ENCODE measurements at regions of chr11 and their contacts with region 1.

Region 1: GRCh38 chr11:2885676-2886081 is at the start of gene CDKN1C:
- DNase-seq: peak; percentile 86
- ATAC-seq: peak; percentile 89
- H3K4me3 Mint-ChIP-seq: peak within 1 kb of the TSS; percentile 74
- H3K27ac Mint-ChIP-seq: no peak within 1 kb of the TSS
- H3K4me1 Mint-ChIP-seq: peaks cover 19% of the 10 kb centered on the region
- H3K27me3 Mint-ChIP-seq: peaks cover 22% of the 10 kb centered on the region
- total RNA-seq, gene CDKN1C: 0.21 to 0.32 TPM

Region 2: GRCh38 chr11:2428322-2428795 is 457.3 kb before region 1 on chr11:
- CTCF ChIA-PET with region 1: interaction called, 17 read pairs
- POLR2A ChIA-PET with region 1: no interaction called
- DNase-seq: peak; percentile 78
- ATAC-seq: peak; percentile 86
- H3K4me3 Mint-ChIP-seq: no peak overlapping the region
- H3K27ac Mint-ChIP-seq: no peak overlapping the region
- H3K4me1 Mint-ChIP-seq: no peaks in the 10 kb centered on the region
- H3K27me3 Mint-ChIP-seq: no peaks in the 10 kb centered on the region

Region 3: GRCh38 chr11:2809854-2810253 is 75.8 kb before region 1 on chr11:
- CTCF ChIA-PET with region 1: no interaction called
- POLR2A ChIA-PET with region 1: no interaction called
- DNase-seq: no peak
- ATAC-seq: no peak
- H3K4me3 Mint-ChIP-seq: no peak overlapping the region
- H3K27ac Mint-ChIP-seq: no peak overlapping the region
- H3K4me1 Mint-ChIP-seq: peaks cover 33% of the 10 kb centered on the region
- H3K27me3 Mint-ChIP-seq: peaks cover 3% of the 10 kb centered on the region

Region 4: DNA sequence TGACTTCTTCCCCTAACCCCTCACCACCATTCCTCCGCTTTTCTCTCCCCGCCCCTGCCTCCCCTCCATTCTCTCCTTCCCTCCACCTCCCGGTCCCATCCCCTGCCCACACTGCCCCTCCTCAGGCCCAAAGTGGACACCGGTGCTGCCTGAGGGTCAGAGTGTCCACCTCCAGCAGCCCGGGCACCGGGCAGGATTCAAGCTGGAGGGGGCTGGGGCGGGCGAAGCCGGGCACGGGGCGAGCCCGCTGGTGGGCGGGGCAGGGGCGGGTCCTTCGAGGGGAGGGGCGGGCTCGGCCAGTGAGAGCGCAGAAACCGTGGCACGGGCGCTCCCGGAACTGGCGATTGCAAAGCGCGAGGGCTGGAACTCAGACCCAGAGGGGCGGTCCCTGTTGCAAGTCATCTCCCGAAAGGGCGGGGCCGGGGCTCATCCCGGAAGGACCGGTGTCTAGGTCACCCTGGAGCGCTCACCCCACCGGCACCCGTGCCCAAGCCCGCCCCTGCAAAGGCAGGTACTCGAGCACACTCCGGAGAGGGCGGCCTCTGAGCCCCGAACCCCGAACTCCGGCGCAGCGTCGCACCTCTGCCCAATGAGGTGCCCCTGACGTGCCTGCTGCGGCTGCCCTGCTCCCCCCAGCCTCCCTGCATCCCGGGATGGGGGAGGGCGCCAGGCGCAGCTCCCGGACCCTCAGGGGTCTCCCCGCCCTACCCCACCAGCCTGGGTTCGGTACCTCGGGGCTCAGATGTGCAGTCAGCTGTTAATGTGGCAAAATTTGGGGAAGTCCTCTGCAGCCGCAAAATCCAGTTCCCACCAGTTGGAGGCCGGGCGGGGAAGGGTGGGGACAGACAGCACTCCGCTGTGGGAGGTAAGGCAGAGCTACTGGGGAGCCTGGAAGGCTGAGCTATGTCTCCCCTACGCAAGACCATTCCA is 16.4 kb after region 1 on chr11:
- CTCF ChIA-PET with region 1: interaction called, 11 read pairs
- POLR2A ChIA-PET with region 1: no interaction called
- DNase-seq: peak; percentile 97
- ATAC-seq: peak; percentile 94
- H3K4me3 Mint-ChIP-seq: peak overlapping the region; percentile 73
- H3K27ac Mint-ChIP-seq: peak overlapping the region; percentile 81
- H3K4me1 Mint-ChIP-seq: peaks cover 52% of the 10 kb centered on the region
- H3K27me3 Mint-ChIP-seq: no peaks in the 10 kb centered on the region

Region 5: GRCh38 chr11:2930704-2931428 is 45.2 kb after region 1 on chr11:
- CTCF ChIA-PET with region 1: interaction called, 15 read pairs
- POLR2A ChIA-PET with region 1: no interaction called
- DNase-seq: peak; percentile 72
- ATAC-seq: peak; percentile 23
- H3K4me3 Mint-ChIP-seq: peak overlapping the region; percentile 73
- H3K27ac Mint-ChIP-seq: peak overlapping the region; percentile 66
- H3K4me1 Mint-ChIP-seq: peaks cover 44% of the 10 kb centered on the region
- H3K27me3 Mint-ChIP-seq: peaks cover 26% of the 10 kb centered on the region

Region 6: GRCh38 chr11:3195251-3196160 is 309.8 kb after region 1 on chr11:
- CTCF ChIA-PET with region 1: no interaction called
- POLR2A ChIA-PET with region 1: no interaction called
- DNase-seq: no peak
- ATAC-seq: no peak
- H3K4me3 Mint-ChIP-seq: no peak overlapping the region
- H3K27ac Mint-ChIP-seq: no peak overlapping the region
- H3K4me1 Mint-ChIP-seq: no peaks in the 10 kb centered on the region
- H3K27me3 Mint-ChIP-seq: no peaks in the 10 kb centered on the region

Measured in activated CD8-positive, alpha-beta T cell treated with anti-CD3 and anti-CD28 coated beads, Interleukin-2, amount 10 ng/mL, durations not matched to agents 7 days and 5 days (primary cell).